Common myeloid progenitor, CD34-positive (primary cell): ENCODE measurements at regions of chr11 and their contacts with region 1.

Region 1: GRCh38 chr11:16820324-16821092 is 82.1 kb downstream of the C11orf58 start:
- DNase-seq: peak; percentile 67 to 80 (median 78)
- H3K4me3 ChIP-seq: no peak overlapping the region
- H3K27ac ChIP-seq: no peak overlapping the region
- H3K4me1 ChIP-seq: peaks cover 3 to 16% (median 6%) of the 10 kb centered on the region in 4 experiments
- H3K27me3 ChIP-seq: no peaks in the 10 kb centered on the region

Region 2: DNA sequence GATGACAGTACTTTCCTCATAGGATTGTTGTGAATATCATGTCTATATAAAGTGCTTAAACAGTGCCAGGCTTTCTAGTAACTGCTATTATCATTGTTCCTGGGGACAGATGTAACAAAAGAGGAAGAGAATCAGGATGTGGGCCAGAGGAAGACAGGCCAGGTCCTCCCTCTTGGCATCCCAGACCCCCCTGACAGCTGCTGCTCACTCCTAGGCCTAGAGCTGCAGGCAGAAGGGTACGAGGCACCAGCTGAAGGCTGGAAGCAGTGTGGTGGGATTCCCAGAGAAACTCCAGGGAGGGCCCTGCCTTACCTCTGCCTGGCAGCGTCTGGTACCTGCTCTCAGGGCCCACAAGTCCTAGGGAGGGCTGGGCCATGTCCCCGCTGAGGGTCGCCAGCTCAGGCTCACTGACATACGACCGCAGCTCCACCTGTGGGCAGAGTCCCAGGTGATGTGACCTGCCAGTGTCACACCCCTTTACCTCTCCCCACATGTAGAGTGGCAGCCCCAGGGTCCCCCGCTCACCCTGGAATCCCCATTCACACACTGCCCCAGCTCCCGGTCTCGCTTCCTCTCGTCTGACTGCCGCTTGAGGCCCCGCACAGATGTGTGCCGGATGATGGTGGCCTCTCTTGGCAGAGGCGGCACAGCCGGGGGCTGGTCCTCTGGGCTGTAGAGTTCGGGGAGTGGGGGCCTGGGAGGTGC is 29.9 kb before region 1 on chr11:
- CTCF ChIA-PET with region 1: interaction called, 184 read pairs
- POLR2A ChIA-PET with region 1: no interaction called
- DNase-seq: peak in 2 of 3 donors; percentile 58 to 65
- H3K4me3 ChIP-seq: no peak overlapping the region
- H3K27ac ChIP-seq: no peak overlapping the region
- H3K4me1 ChIP-seq: peaks cover 11 to 63% (median 50%) of the 10 kb centered on the region in 4 experiments
- H3K27me3 ChIP-seq: no peaks in the 10 kb centered on the region

Region 3: GRCh38 chr11:16804104-16804947 is 16.2 kb before region 1 on chr11:
- CTCF ChIA-PET with region 1: interaction called, 10 read pairs
- POLR2A ChIA-PET with region 1: no interaction called
- DNase-seq: no peak
- H3K4me3 ChIP-seq: no peak overlapping the region
- H3K27ac ChIP-seq: no peak overlapping the region
- H3K4me1 ChIP-seq: peaks cover 6 to 52% (median 27%) of the 10 kb centered on the region in 4 experiments
- H3K27me3 ChIP-seq: no peaks in the 10 kb centered on the region

Region 4: GRCh38 chr11:16809886-16810668 is 10.4 kb before region 1 on chr11:
- CTCF ChIA-PET with region 1: interaction called, 19 read pairs
- POLR2A ChIA-PET with region 1: no interaction called
- DNase-seq: peak in 2 of 3 donors; percentile 44 to 59
- H3K4me3 ChIP-seq: no peak overlapping the region
- H3K27ac ChIP-seq: no peak overlapping the region
- H3K4me1 ChIP-seq: peaks cover 10 to 63% (median 33%) of the 10 kb centered on the region in 4 experiments
- H3K27me3 ChIP-seq: no peaks in the 10 kb centered on the region

Region 5: GRCh38 chr11:16881074-16881709 is 60.7 kb after region 1 on chr11:
- CTCF ChIA-PET with region 1: interaction called, 25 read pairs
- POLR2A ChIA-PET with region 1: interaction called, 3 read pairs
- DNase-seq: peak in 2 of 3 donors; percentile 14 to 24
- H3K4me3 ChIP-seq: no peak overlapping the region
- H3K27ac ChIP-seq: no peak overlapping the region
- H3K4me1 ChIP-seq: peaks cover 0 to 5% (median 0%) of the 10 kb centered on the region in 4 experiments
- H3K27me3 ChIP-seq: no peaks in the 10 kb centered on the region

Region 6: GRCh38 chr11:17063171-17064002 is 242.9 kb after region 1 on chr11:
- CTCF ChIA-PET with region 1: interaction called, 12 read pairs
- POLR2A ChIA-PET with region 1: no interaction called
- DNase-seq: peak; percentile 43 to 58 (median 50)
- H3K4me3 ChIP-seq: no peak overlapping the region
- H3K27ac ChIP-seq: no peak overlapping the region
- H3K4me1 ChIP-seq: no peaks in the 10 kb centered on the region
- H3K27me3 ChIP-seq: no peaks in the 10 kb centered on the region